Breast epithelium (tissue), 4 donors: ENCODE measurements at regions of chr2 and their contacts with region 1.

Region 1: GRCh38 chr2:58407487-58407886 is 166.4 kb upstream of the FANCL start:
- DNase-seq: no peak
- H3K4me3 ChIP-seq: no peak overlapping the region
- H3K27ac ChIP-seq: no peak overlapping the region
- H3K4me1 ChIP-seq: no peaks in the 10 kb centered on the region
- H3K27me3 ChIP-seq: no peaks in the 10 kb centered on the region
- CTCF ChIP-seq: no peak
- POLR2A ChIP-seq: no peak

Region 2: DNA sequence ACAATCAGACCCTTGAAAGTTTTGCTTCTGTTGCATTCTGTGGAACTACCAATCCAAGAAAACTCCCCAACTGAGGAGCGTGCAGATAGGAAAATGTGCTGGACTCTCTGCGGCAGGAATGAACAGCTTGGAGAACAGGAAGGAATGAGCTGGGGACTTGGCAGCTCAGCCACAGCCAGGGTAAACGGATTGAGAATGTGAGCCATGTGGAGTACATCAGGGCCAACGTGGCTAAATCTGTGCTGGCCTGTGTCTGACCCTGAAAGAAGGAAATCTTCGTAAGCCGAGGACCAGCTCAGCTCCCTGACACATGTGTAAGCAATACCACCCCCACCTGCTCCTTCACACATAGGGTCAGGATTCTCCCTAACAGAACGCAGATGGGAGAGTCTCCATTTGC is 1122.2 kb after region 1 on chr2:
- intact Hi-C with region 1: loop called (anchors 5 kb)
- DNase-seq: no peak
- H3K4me3 ChIP-seq: no peak overlapping the region
- H3K27ac ChIP-seq: no peak overlapping the region
- H3K4me1 ChIP-seq: no peaks in the 10 kb centered on the region
- H3K27me3 ChIP-seq: no peaks in the 10 kb centered on the region
- CTCF ChIP-seq: no peak
- POLR2A ChIP-seq: no peak